ENCODE measurements at regions of chr5 and their contacts with region 1.

Region 1: GRCh38 chr5:43556857-43557542 is at the start of gene PAIP1:
- DNase-seq: peak; percentile 48 to 86 (median 63)
- H3K4me3 ChIP-seq: peak within 1 kb of the TSS; percentile 58 to 89 (median 81)
- H3K27ac ChIP-seq: peak within 1 kb of the TSS; percentile 61 to 98 (median 93)
- H3K27me3 ChIP-seq: no peaks in the 10 kb centered on the region
- CTCF ChIP-seq: peak in 55 of 56 donors; percentile 11 to 88 (median 66)
- total RNA-seq, gene PAIP1: 54.5 to 90.5 (median 70.5) TPM

Region 2: GRCh38 chr5:43514816-43515677 is 42.0 kb before region 1 on chr5 and contains the start of gene C5orf34:
- intact Hi-C with region 1: loop called in 1 of 2 experiments (anchors 5 kb)
- DNase-seq: peak; percentile 80 to 96 (median 94)
- H3K4me3 ChIP-seq: peak within 1 kb of the TSS; percentile 52 to 97 (median 70)
- H3K27ac ChIP-seq: peak within 1 kb of the TSS in 58 of 59 donors; percentile 9 to 95 (median 83)
- H3K27me3 ChIP-seq: no peaks in the 10 kb centered on the region
- CTCF ChIP-seq: peak in 41 of 56 donors; percentile 10 to 58 (median 34)
- total RNA-seq, gene C5orf34: 0.89 to 7.7 (median 3.3) TPM

Region 3: DNA sequence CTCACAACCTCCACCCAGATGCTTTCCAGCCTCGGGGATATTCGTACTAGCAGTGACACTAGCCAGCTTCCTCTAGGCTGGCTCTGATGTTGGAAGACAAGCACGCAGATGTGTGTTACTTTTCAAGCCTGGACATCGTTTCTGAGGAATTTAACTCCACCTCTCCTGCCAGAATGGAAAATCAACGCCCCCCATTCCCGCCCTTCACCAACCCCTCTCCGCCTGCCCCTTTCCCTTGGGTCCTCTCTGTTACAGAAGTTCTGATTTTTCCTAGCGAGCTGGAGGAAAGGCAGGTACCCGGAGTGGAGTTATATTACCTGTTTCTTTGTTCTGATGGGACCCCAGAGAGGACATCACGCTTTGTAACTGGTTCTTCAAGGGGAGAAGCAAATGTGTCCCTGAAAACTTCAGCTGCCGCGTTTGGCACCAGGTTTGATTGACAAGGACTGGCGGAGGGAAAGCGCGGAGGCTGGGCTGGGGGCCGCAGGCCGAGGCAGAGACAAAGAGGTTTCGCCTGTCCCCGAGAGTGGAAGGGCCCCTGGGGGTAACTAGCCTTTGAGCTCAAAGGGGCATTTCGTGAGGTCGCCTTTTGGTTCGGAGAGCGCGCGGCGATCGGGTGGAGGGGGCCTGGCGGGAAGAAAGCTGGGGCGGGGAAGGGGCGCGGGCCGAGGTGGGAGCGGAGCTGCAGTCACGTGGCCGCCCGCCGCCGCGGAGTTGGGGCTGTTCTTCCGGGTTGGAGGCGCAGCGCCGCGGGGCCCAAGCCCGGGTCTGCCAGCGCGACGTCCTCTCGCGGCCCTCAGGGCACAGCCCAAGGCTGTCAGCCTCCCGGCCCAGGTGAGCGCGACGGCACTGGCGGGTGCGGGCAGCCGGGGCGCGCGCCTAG is 45.7 kb after region 1 on chr5 and contains the start of gene NNT:
- intact Hi-C with region 1: loop called (anchors 2 kb)
- DNase-seq: peak; percentile 59 to 91 (median 76)
- H3K4me3 ChIP-seq: peak within 1 kb of the TSS; percentile 54 to 96 (median 89)
- H3K27ac ChIP-seq: peak within 1 kb of the TSS; percentile 0 to 93 (median 80)
- H3K27me3 ChIP-seq: no peaks in the 10 kb centered on the region
- CTCF ChIP-seq: peak in 22 of 56 donors; percentile 5 to 43 (median 23)
- total RNA-seq, gene NNT: 79.8 to 197 (median 130) TPM

Region 4: DNA sequence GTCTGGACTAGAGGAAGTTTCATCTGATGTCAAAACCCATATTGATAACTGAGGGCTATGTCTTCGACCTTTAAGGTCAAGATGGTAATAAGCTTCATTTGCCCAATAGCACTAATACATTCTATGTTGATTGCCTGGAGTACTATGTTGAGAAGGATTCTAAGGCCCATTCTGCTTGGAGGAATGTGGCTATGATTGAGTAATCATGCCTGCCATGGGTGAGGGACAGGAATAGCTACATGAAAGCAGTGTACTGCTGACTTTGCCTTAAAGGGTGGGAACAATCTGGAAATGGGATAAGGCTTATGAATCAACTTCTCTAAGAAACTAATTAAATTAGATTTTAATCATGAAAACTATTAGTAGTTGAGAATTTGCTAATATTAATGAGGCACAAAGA is 59.5 kb after region 1 on chr5:
- intact Hi-C with region 1: no loop called
- DNase-seq: no peak
- H3K4me3 ChIP-seq: no peak overlapping the region
- H3K27ac ChIP-seq: no peak overlapping the region
- H3K27me3 ChIP-seq: no peaks in the 10 kb centered on the region
- CTCF ChIP-seq: no peak